Thyroid gland (tissue), 4 donors: ENCODE measurements at regions of chr12 and their contacts with region 1.

Region 1: GRCh38 chr12:80269803-80270552 is 170.6 kb downstream of the OTOGL start:
- DNase-seq: no peak
- H3K4me3 ChIP-seq: no peak overlapping the region
- H3K27ac ChIP-seq: no peak overlapping the region
- H3K4me1 ChIP-seq: no peaks in the 10 kb centered on the region
- H3K27me3 ChIP-seq: no peaks in the 10 kb centered on the region
- CTCF ChIP-seq: peak in 5 of 6 experiments; percentile 20 to 56 (median 42)
- POLR2A ChIP-seq: no peak

Region 2: DNA sequence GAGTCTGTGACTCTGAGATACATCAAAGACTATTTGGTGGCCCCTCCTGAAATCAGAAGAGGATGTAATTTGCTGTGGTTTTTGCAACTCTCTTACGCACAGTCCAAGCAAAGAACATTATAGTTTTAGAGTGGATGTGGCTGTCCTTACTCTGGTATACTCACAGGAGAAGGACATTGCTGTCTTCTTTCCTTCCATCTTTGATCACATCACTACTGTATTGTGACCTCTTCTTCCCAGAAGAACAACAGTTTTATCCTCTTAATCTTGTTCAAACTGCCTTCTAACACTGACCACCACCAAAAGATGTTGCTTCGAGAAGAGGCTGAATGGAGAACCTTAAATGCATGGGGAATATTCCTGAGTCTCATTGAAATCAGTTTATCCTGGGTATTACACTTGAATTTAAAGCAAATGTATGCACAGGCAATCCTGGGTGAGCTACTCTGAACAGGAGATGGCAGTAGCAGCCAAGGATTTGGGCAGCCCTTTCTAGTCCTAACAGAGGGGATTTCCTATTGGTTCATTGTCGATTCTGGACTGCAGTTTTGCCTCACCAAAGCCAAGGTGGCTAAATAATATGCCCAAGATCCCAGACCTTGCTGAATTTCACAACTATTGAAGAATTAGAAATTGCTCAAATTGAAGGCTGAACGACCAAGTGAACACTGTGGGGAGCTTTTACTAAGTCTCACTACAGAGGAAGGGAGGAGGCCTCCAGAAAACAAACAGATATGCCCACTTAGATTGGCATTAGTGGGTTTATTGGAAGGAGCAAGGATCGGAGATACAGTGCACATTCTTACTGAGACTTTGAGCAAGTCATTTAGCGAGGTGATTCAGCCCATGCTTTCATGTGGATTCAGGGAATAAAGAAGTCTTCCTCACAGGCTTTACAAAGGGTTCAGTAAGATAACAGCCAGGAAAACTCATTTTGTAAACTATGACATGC is 862.0 kb before region 1 on chr12:
- intact Hi-C with region 1: loop called (anchors 10 kb)
- DNase-seq: peak; percentile 53 to 69
- H3K4me3 ChIP-seq: no peak overlapping the region
- H3K27ac ChIP-seq: no peak overlapping the region
- H3K4me1 ChIP-seq: no peaks in the 10 kb centered on the region
- H3K27me3 ChIP-seq: no peaks in the 10 kb centered on the region
- CTCF ChIP-seq: peak in 5 of 6 experiments; percentile 33 to 90 (median 70)
- POLR2A ChIP-seq: no peak

Region 3: GRCh38 chr12:80195074-80195726 is 74.8 kb before region 1 on chr12:
- intact Hi-C with region 1: loop called (anchors 10 kb)
- DNase-seq: peak; percentile 4 to 14
- H3K4me3 ChIP-seq: no peak overlapping the region
- H3K27ac ChIP-seq: no peak overlapping the region
- H3K4me1 ChIP-seq: no peaks in the 10 kb centered on the region
- H3K27me3 ChIP-seq: no peaks in the 10 kb centered on the region
- CTCF ChIP-seq: peak in 3 of 6 experiments; percentile 33 to 46 (median 41)
- POLR2A ChIP-seq: no peak

Region 4: DNA sequence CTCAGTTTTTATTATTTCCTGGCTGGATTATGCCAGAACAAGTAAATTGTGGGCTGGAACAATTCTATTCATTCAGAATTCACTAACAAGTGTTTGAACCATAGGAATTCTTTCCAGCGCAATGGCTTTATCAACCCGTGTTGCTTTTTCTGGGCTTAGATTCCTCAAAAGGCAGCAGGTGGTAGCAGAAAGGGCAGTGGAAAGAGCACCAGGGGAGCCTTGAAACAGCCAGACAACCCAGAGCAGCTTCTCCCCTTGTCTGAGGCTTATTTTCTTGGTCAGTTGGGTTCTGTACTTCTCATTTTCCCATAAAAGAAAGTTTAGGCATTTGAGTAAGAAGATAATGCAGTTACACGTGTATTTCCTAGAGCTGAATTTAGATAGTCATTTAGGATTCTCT is 39.9 kb before region 1 on chr12:
- intact Hi-C with region 1: no loop called
- DNase-seq: peak in 1 of 2 donors; percentile 8
- H3K4me3 ChIP-seq: no peak overlapping the region
- H3K27ac ChIP-seq: no peak overlapping the region
- H3K4me1 ChIP-seq: peaks cover 0 to 3% of the 10 kb centered on the region in 2 donors
- H3K27me3 ChIP-seq: no peaks in the 10 kb centered on the region
- CTCF ChIP-seq: no peak
- POLR2A ChIP-seq: no peak